Activated T-helper 2 cell treated with anti-CD3 and anti-CD28 coated beads, Interferon-gamma antibody, Interleukin-2, Interleukin-4, amounts not matched to agents 10 μg/mL and 5 μg/mL and 100 μg/mL, durations not matched to agents 14 hours and 24 hours and 36 hours (primary cell): ENCODE measurements at regions of chr22 and their contacts with region 1.

Region 1: GRCh38 chr22:30591588-30592359 is at the start of gene PES1:
- DNase-seq: peak; percentile 93
- H3K4me3 Mint-ChIP-seq: no peak within 1 kb of the TSS
- H3K27ac Mint-ChIP-seq: no peak within 1 kb of the TSS
- H3K4me1 Mint-ChIP-seq: peaks cover 14% of the 10 kb centered on the region
- H3K27me3 Mint-ChIP-seq: peaks cover 12% of the 10 kb centered on the region
- total RNA-seq, gene PES1: 129 and 132 TPM in 2 replicates

Region 2: GRCh38 chr22:30606455-30607299 is 14.9 kb after region 1 on chr22 and contains the start of gene TCN2:
- intact Hi-C with region 1: loop called (anchors 1 kb)
- DNase-seq: peak; percentile 12
- H3K4me3 Mint-ChIP-seq: peak within 1 kb of the TSS; percentile 81
- H3K27ac Mint-ChIP-seq: peak within 1 kb of the TSS; percentile 80
- H3K4me1 Mint-ChIP-seq: peaks cover 40% of the 10 kb centered on the region
- H3K27me3 Mint-ChIP-seq: peaks cover 3% of the 10 kb centered on the region
- total RNA-seq, gene TCN2: 0.51 and 0.68 TPM in 2 replicates